PC-9 (cell line): ENCODE measurements at regions of chr18 and their contacts with region 1.

Region 1: DNA sequence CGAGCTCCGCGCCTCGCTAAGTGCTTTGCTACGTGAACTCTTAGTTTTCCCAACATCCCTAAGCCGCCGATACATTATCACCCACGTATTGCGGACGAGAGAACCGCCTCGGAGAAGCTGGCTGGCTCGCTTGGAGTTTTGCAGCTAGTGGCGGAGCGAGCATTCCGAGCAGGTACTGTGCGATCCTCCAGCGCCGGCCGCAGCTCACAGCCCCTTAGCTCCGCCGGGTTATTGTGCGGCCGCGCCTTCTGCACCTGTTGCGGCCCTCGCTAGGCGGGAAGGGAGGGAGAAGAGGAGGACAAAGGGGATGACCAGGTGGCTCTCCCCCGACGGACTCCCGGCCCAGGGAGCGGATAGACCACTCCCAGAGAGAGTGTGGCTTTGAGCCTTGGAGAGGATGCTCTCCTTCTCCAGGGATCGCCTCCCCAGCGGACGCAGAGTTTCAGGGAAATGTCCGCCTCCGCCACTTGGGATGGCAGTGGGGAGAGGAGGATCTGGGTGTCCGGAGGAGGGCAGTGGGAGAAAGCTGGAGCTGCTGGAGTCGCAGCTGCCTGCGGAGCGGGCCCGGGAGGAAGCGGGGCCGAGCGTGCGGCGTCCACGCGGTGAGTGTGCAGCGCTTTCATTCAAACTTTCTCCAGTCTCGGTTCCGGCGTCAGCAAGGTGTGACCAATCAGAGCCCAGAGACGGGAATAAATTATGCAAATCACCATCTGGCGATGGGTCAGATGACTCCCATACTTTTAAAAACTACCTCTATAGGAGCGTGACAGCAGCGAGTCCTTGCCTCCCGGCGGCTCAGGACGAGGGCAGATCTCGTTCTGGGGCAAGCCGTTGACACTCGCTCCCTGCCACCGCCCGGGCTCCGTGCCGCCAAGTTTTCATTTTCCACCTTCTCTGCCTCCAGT is at the start of gene LIPG:
- DNase-seq: peak; percentile 69 to 94
- H3K4me3 ChIP-seq: peak within 1 kb of the TSS; percentile 83
- H3K27ac ChIP-seq: peak within 1 kb of the TSS; percentile 86
- H3K4me1 ChIP-seq: peaks cover 19% of the 10 kb centered on the region
- H3K27me3 ChIP-seq: no peaks in the 10 kb centered on the region
- CTCF ChIP-seq: no peak
- total RNA-seq, gene LIPG: 22.7 and 30.9 TPM in 2 replicates

Region 2: DNA sequence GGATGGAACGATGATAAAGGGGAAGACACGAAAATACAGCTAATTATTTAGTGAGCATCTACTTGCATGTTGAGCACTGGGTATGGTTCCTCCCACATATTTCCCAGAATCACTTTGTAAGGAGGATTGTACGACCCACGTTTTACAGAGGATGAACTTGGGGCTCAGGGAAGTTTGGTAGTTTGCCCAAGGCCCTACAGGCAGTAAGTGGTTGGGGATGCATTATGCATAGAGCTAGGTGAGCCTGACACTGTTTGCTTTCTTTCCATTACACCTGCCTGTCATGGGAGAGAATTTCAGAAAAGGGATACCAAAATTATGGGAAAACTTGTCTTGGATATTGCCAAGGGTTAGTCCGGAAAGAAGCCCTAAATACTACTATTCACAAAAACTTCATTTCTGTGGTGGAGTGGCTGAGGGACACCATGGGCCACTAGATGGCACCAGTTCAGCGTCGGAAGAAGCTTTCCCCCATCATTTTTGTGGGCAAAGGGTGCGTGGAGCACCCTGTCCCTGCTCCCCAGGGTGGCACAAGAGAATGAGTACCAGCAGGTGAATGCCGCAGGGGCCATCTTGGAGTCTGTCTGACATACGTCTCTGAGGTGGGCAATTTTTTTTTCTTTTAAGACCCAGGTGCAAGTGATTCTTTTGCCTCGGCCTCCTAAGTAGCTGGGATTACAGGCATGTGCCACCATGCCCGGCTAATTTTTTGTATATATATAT is 51.0 kb before region 1 on chr18:
- CTCF ChIA-PET with region 1: no interaction called
- POLR2A ChIA-PET with region 1: no interaction called
- intact Hi-C with region 1: loop called (anchors 2 kb)
- DNase-seq: peak in 1 of 2 experiments; percentile 42
- H3K4me3 ChIP-seq: no peak overlapping the region
- H3K27ac ChIP-seq: no peak overlapping the region
- H3K4me1 ChIP-seq: no peaks in the 10 kb centered on the region
- H3K27me3 ChIP-seq: no peaks in the 10 kb centered on the region
- CTCF ChIP-seq: peak; percentile 91

Region 3: GRCh38 chr18:49690307-49690706 is 128.8 kb after region 1 on chr18:
- CTCF ChIA-PET with region 1: no interaction called
- POLR2A ChIA-PET with region 1: interaction called, 3 read pairs
- intact Hi-C with region 1: loop called (anchors 1 kb)
- DNase-seq: peak; percentile 3 to 91
- H3K4me3 ChIP-seq: no peak overlapping the region; the same call in 1 of the 2 replicates
- H3K27ac ChIP-seq: peak overlapping the region; percentile 94
- H3K4me1 ChIP-seq: peaks cover 39% of the 10 kb centered on the region
- H3K27me3 ChIP-seq: no peaks in the 10 kb centered on the region
- CTCF ChIP-seq: no peak

Region 4: DNA sequence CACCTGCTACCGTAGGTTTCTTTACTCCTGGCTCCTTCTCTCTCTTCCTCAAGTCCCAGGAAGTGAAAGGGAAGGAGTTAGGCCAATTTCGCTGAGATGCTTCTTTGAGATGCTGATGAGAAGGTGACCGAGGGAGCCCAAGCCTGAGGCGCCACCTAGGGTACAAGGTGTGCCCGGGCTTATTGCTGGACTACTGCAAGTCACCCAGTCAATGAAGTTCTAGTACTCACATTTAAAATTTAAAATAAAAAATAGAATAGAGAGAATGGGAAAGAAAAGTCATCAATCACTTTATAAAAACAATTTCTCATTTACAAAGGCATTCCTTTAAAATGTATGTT is 206.5 kb after region 1 on chr18:
- CTCF ChIA-PET with region 1: interaction called, 5 read pairs
- POLR2A ChIA-PET with region 1: no interaction called
- intact Hi-C with region 1: loop called (anchors 1 kb)
- DNase-seq: peak; percentile 63 to 64
- H3K4me3 ChIP-seq: no peak overlapping the region
- H3K27ac ChIP-seq: no peak overlapping the region
- H3K4me1 ChIP-seq: no peaks in the 10 kb centered on the region
- H3K27me3 ChIP-seq: no peaks in the 10 kb centered on the region
- CTCF ChIP-seq: peak; percentile 89

Region 5: DNA sequence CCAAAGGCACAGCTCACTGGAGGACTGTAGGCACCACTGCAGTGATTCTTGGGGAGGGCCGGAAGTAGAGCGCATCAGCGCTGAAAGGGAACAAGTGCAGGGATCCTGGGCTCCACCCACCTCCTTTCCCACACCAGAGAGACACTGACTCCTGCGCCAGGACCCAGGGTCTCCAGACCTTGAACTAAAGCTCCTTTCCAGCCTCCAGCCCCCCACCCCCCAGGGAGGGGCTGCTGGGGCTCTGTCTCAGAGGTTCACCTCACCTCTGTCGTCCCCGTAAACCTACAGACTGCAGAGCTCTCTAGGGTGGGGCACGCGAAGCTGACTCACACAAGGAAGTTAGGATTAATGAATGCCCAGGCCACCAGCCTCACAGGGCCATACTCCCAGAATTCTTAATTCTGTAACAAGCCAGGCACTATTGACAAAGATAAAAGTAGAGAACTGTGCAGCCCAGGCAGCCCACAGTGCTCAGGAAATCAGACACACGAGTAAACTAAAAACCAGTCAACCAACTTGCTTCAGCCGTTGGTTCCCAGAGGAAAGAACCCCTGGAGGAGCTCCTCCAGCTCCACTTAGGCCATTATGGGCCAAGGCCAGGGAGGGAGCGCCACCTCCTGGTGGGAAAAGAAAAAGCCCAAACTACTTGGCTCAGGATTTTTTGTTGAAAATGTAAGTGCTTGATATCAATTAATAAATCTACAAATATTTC is 296.9 kb after region 1 on chr18:
- CTCF ChIA-PET with region 1: no interaction called
- POLR2A ChIA-PET with region 1: no interaction called
- intact Hi-C with region 1: loop called (anchors 1 kb)
- DNase-seq: peak; percentile 66
- H3K4me3 ChIP-seq: no peak overlapping the region
- H3K27ac ChIP-seq: no peak overlapping the region
- H3K4me1 ChIP-seq: peaks cover 11% of the 10 kb centered on the region
- H3K27me3 ChIP-seq: no peaks in the 10 kb centered on the region
- CTCF ChIP-seq: peak; percentile 95

Region 6: DNA sequence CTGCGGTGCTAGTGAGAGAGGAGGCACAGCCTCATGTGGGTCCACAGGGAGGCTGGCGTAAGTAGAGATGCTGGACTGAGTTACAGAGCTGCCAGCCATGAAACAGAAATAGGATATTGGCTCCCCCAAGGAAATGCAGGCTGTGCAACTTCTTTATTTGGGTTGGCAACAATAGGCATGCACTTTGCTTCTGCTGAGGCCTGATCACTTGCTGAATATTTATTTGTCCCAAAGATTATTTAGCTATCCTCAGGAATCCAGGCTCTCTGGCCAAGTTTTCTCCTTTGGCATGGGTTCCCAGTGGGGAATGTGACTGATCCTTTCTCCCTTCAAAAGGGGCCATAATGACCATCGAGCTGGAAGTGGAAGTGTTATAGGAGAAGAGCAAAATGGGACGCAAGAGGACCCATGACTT is 1058.3 kb after region 1 on chr18:
- CTCF ChIA-PET with region 1: no interaction called
- POLR2A ChIA-PET with region 1: no interaction called
- intact Hi-C with region 1: no loop called
- DNase-seq: no peak
- H3K4me3 ChIP-seq: no peak overlapping the region
- H3K27ac ChIP-seq: no peak overlapping the region
- H3K4me1 ChIP-seq: no peaks in the 10 kb centered on the region; the same call in 1 of the 2 replicates
- H3K27me3 ChIP-seq: no peaks in the 10 kb centered on the region
- CTCF ChIP-seq: no peak